SK-N-SH (cell line): ENCODE measurements at regions of chr1 and their contacts with region 1.

Region 1: GRCh38 chr1:168603501-168604110 is 27.2 kb downstream of the XCL1 start:
- DNase-seq: peak; percentile 66
- H3K4me3 ChIP-seq: no peak overlapping the region
- H3K27ac ChIP-seq: peak overlapping the region in 1 of 2 experiments; percentile 55; a peak in 2 of 4 replicates
- H3K4me1 ChIP-seq: peaks cover 4 to 5% of the 10 kb centered on the region in 2 experiments; a peak in 3 of 4 replicates
- H3K27me3 ChIP-seq: no peaks in the 10 kb centered on the region
- CTCF ChIP-seq: peak; percentile 90
- EP300 ChIP-seq: 0 out of 4 replicates have a peak, but pooled peaks of 1 of the 2 experiments have one; percentile 11
- RAD21 ChIP-seq: peak; percentile 99

Region 2: GRCh38 chr1:168591066-168591465 is 12.5 kb before region 1 on chr1:
- CTCF ChIA-PET with region 1: interaction called, 15 read pairs
- POLR2A ChIA-PET with region 1: no interaction called
- DNase-seq: no peak
- H3K4me3 ChIP-seq: no peak overlapping the region
- H3K27ac ChIP-seq: no peak overlapping the region
- H3K4me1 ChIP-seq: no peaks in the 10 kb centered on the region; a peak in 1 of 4 replicates
- H3K27me3 ChIP-seq: no peaks in the 10 kb centered on the region
- CTCF ChIP-seq: no peak
- EP300 ChIP-seq: no peak
- RAD21 ChIP-seq: no peak

Region 3: DNA sequence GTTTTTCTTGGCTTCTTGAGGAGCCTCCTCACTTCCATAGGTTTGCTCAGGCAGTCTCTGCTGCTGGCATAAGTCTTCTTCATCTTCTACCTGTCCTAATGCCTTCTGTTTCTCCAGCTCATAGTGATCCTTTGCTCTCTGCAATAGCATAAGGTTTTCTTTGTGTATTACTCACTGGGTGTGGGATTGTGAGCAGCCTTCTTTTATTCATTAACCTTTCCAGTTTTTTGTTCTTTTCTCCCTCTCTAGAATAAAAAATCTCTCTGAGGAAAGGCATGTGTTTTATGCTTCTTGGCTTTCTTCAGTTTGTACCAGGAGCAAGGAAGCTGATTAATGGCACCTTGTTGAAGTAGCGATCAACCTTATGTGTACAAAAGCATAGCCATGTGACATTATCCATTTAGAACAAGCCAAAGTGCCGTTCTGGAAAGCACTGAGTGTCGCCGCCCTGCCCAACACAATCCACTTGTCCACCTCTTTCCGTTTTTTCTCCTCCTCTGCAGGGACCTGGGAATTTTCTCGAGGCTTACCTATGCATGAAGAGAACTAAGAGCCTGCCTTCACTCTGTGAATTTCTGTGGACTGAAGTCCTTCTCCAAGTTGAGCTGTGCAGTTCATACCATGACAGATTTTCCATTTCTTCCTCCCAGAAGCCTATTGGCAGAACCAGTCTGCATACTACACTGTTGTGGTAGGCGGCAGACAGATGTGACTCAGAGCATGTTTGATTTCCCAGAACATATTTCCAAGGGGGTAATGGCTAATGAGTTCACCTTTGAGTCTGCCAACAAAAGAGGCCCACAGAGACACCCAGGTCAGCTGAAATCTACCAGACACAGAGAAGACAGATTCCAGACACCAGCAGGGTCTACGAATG is 86.4 kb after region 1 on chr1:
- CTCF ChIA-PET with region 1: interaction called, 13 read pairs
- POLR2A ChIA-PET with region 1: no interaction called
- DNase-seq: peak; percentile 36
- H3K4me3 ChIP-seq: no peak overlapping the region
- H3K27ac ChIP-seq: peak overlapping the region; percentile 58 to 100
- H3K4me1 ChIP-seq: peaks cover 0 to 43% of the 10 kb centered on the region in 2 experiments; a peak in 3 of 4 replicates
- H3K27me3 ChIP-seq: no peaks in the 10 kb centered on the region
- CTCF ChIP-seq: no peak
- EP300 ChIP-seq: peak; percentile 87 to 96
- RAD21 ChIP-seq: peak; percentile 46

Region 4: GRCh38 chr1:169348383-169349036 is 744.9 kb after region 1 on chr1:
- CTCF ChIA-PET with region 1: interaction called, 189 read pairs
- POLR2A ChIA-PET with region 1: interaction called, 3 read pairs
- DNase-seq: peak; percentile 37
- H3K4me3 ChIP-seq: no peak overlapping the region; a peak in 1 of 4 replicates
- H3K27ac ChIP-seq: no peak overlapping the region
- H3K4me1 ChIP-seq: peaks cover 4% of the 10 kb centered on the region in 2 experiments; a peak in 1 of 4 replicates
- H3K27me3 ChIP-seq: no peaks in the 10 kb centered on the region
- CTCF ChIP-seq: peak; percentile 87
- EP300 ChIP-seq: no peak
- RAD21 ChIP-seq: peak; percentile 92

Region 5: DNA sequence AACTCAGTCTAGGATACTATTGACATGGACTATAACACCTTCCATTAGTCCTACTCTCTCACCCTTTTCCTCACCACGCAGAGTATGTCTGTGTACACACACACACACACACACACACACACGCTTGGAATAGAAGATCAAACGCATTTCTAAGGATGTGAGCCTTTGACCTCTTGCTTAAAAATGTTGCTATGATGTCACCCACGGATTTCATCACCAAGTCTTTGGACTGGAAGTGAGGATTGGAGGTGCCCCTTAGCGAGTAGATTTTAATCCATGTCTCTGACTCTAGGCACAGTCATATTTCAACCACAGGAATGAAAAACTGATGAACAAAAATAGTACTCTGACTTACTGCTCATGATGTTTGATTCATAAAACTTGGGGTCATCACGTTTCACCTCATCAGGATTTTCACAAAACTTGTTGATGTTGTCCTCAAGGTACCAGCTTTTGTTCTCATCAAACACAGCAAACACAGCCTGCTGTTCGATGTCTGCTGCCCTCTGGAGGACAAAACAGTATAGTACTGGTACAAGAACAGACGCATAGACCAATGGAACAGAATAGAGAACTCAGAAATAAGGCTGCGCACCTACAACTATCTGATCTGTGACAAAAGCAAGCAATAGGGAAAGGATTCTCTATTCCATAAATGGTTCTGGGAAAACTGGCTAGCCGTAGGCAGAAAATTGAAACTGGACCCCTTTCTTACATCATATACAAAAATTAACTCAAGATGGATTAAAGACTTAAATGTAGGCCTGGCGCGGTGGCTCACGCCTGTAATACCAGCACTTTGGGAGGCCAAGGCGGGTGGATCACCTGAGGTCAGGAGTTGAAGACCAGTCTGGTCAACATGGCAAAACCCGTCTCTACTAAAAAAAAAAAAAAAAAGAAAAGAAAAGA is 942.7 kb after region 1 on chr1:
- CTCF ChIA-PET with region 1: interaction called, 14 read pairs
- POLR2A ChIA-PET with region 1: no interaction called
- DNase-seq: peak; percentile 14
- H3K4me3 ChIP-seq: no peak overlapping the region; a peak in 1 of 4 replicates
- H3K27ac ChIP-seq: no peak overlapping the region
- H3K4me1 ChIP-seq: no peaks in the 10 kb centered on the region
- H3K27me3 ChIP-seq: no peaks in the 10 kb centered on the region; the same call in 1 of the 2 replicates
- CTCF ChIP-seq: peak; percentile 90
- EP300 ChIP-seq: no peak
- RAD21 ChIP-seq: peak; percentile 80